ENCODE measurements at regions of chr6 and their contacts with region 1.

Region 1: GRCh38 chr6:32413427-32414047 is 6.6 kb upstream of the BTNL2 start:
- DNase-seq: peak; percentile 82

Region 2: DNA sequence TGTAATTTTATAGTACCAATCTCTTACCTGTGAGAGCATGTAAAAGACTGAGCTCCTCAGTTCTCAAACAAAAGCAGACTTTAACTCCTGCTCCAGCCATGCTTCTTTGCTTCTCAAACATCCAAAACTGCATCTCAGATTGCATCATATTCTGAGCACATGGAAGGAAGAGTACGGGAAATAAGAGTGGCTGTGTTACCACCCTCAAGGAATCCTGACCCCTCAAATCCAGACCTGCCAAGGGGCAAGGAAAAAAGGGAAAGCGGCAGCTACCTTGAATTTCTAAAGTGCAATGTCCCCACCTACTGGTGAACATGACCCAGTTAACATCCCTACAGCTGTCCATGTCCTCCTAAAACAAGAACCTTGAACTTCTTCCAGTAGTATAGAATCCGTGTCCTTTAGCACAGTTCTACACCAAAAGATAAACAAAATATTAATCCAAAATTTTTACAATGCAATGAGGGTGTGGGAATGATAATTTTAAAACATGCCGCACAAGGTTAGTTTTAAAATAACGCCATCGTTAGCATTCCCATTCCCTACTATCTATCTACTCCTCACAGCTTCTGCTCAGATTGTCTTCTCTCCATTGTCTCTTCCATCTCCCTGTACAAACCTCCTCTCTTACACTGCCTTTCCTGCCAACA is 287.0 kb after region 1 on chr6:
- in situ Hi-C with region 1: loop called (anchors 25 kb)
- DNase-seq: peak; percentile 77

Region 3: GRCh38 chr6:32796848-32797776 is 383.6 kb after region 1 on chr6:
- in situ Hi-C with region 1: loop called (anchors 25 kb)
- DNase-seq: peak; percentile 93